Panc1 (cell line): ENCODE measurements at regions of chr10 and their contacts with region 1.

Region 1: GRCh38 chr10:63465293-63466143 is at the start of gene JMJD1C:
- DNase-seq: no peak
- ATAC-seq: peak; percentile 88
- H3K4me3 ChIP-seq: peak within 1 kb of the TSS; percentile 78 to 81
- H3K27ac ChIP-seq: peak within 1 kb of the TSS; percentile 98
- H3K4me1 ChIP-seq: peaks cover 33% of the 10 kb centered on the region
- H3K27me3 ChIP-seq: no peaks in the 10 kb centered on the region
- CTCF ChIP-seq: peak; percentile 29
- total RNA-seq, gene JMJD1C: 88.3 TPM

Region 2: GRCh38 chr10:62038609-62039190 is 1426.8 kb before region 1 on chr10:
- CTCF ChIA-PET with region 1: no interaction called
- POLR2A ChIA-PET with region 1: no interaction called
- in situ Hi-C with region 1: no loop called
- intact Hi-C with region 1: no loop called
- DNase-seq: peak; percentile 69
- ATAC-seq: peak; percentile 82
- H3K4me3 ChIP-seq: no peak overlapping the region
- H3K27ac ChIP-seq: peak overlapping the region; percentile 87
- H3K4me1 ChIP-seq: peaks cover 59% of the 10 kb centered on the region
- H3K27me3 ChIP-seq: no peaks in the 10 kb centered on the region
- CTCF ChIP-seq: peak; percentile 92

Region 3: DNA sequence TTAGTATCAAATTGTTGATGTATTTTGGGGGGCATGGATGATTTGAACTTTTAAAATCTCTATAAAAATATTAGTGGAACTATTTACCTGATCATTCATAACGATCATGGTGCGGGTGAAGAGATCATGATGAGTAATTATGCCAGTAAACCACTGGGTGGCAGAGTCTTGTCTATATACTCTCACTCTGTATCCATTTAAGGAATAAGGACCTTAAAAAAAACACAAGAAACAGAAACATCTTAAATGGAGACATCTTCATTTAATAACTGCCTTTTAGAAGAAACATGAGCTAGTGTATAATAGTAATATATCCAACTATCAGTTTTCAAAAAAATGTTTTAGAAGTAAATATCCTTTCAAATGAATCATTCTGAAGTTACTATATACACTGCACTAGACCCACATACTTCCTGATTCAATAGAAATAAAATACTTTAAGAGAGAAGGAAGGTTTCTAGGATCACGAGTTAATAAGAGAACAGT is 248.4 kb before region 1 on chr10:
- CTCF ChIA-PET with region 1: no interaction called
- POLR2A ChIA-PET with region 1: no interaction called
- in situ Hi-C with region 1: no loop called
- intact Hi-C with region 1: loop called (anchors 5 kb)
- DNase-seq: peak; percentile 41
- ATAC-seq: peak; percentile 95
- H3K4me3 ChIP-seq: no peak overlapping the region
- H3K27ac ChIP-seq: peak overlapping the region; percentile 21; the same call in 1 of the 2 replicates
- H3K4me1 ChIP-seq: peaks cover 18% of the 10 kb centered on the region; the same call in 1 of the 2 replicates
- H3K27me3 ChIP-seq: no peaks in the 10 kb centered on the region
- CTCF ChIP-seq: peak; percentile 76; the same call in 1 of the 2 replicates

Region 4: DNA sequence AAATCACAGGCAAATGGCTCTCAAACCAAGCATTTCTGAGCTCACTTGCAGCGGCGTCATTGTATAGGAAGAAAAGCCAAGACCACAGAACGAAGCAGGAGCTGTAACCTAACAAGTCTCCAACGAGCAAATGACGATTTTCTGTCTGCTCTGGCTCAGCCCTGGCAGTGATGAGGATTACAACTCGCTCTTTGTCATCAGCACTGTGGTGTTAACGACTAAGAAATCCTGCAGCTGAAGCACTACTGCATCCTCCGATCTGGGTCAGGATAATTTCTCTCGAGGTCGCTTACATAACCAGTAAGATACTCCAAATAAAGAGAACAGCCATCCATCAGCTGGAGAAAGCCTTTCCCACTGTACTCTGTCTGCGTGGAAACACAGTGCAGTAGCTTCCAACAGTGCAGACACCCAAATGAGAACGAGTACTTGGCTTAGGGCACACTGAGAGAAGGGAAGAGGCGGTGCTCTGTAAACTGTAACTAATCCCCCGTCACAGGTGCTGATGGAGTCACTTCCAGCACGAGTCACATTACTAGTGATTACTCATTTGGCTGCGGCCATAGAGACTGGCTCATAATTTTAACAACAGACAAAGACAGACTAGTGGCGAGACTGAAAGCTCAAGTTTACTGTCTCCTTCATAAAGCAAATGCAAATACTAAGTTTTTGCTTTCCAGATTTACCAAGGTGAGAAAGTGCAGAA is 196.6 kb before region 1 on chr10:
- CTCF ChIA-PET with region 1: no interaction called
- POLR2A ChIA-PET with region 1: no interaction called
- in situ Hi-C with region 1: no loop called
- intact Hi-C with region 1: loop called (anchors 10 kb)
- DNase-seq: peak; percentile 98
- ATAC-seq: peak; percentile 96
- H3K4me3 ChIP-seq: peak overlapping the region; percentile 77 to 91
- H3K27ac ChIP-seq: peak overlapping the region; percentile 95
- H3K4me1 ChIP-seq: peaks cover 18% of the 10 kb centered on the region
- H3K27me3 ChIP-seq: no peaks in the 10 kb centered on the region
- CTCF ChIP-seq: no peak

Region 5: GRCh38 chr10:63491588-63492316 is 26.2 kb after region 1 on chr10:
- CTCF ChIA-PET with region 1: no interaction called
- POLR2A ChIA-PET with region 1: no interaction called
- in situ Hi-C with region 1: no loop called
- intact Hi-C with region 1: no loop called
- DNase-seq: no peak
- ATAC-seq: no peak
- H3K4me3 ChIP-seq: no peak overlapping the region
- H3K27ac ChIP-seq: no peak overlapping the region
- H3K4me1 ChIP-seq: peaks cover 8% of the 10 kb centered on the region
- H3K27me3 ChIP-seq: no peaks in the 10 kb centered on the region
- CTCF ChIP-seq: no peak

Region 6: DNA sequence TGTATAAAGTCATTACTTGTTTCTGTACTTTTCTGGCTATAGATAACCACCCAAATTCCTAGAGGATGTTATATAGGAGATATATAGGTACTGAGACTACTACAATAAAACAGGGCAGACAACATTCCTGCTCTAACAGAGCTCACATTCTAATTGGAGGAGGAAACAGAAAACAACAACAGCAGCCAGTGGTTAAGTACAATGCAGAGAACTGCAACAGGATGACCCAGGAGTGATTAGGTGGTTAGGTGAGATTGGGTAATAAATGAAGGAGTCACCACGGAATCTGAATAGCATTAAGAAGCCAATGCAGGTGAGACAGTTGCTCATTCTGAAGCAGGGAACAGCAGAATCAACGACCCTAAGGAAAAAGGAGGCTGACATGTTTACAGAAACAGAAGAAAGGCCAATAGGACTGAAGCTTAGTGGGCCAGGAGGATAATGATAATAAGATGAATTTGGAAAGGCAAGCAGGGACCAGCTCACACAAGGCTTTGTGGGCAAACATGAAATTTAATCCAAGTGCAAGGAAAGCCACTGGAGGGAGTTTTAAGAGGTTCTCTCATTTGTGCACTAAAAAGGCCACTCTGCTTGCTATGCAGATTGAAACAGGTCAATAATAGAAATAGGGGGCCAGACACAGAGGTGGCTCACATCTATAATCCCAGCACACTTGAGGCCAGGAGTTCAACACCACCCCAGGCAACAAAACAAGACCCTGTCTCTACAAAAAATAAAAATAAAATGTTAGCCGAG is 38.8 kb after region 1 on chr10:
- CTCF ChIA-PET with region 1: no interaction called
- POLR2A ChIA-PET with region 1: interaction called, 10 read pairs
- in situ Hi-C with region 1: no loop called
- intact Hi-C with region 1: no loop called
- DNase-seq: no peak
- ATAC-seq: peak; percentile 44
- H3K4me3 ChIP-seq: no peak overlapping the region
- H3K27ac ChIP-seq: peak overlapping the region; percentile 30; the same call in 1 of the 2 replicates
- H3K4me1 ChIP-seq: peaks cover 9% of the 10 kb centered on the region
- H3K27me3 ChIP-seq: no peaks in the 10 kb centered on the region
- CTCF ChIP-seq: no peak

Region 7: GRCh38 chr10:63521416-63522276 is 56.1 kb after region 1 on chr10:
- CTCF ChIA-PET with region 1: no interaction called
- POLR2A ChIA-PET with region 1: interaction called, 3 read pairs
- in situ Hi-C with region 1: no loop called
- intact Hi-C with region 1: loop called (anchors 5 kb)
- DNase-seq: no peak
- ATAC-seq: peak; percentile 86
- H3K4me3 ChIP-seq: peak overlapping the region; percentile 71 to 83
- H3K27ac ChIP-seq: peak overlapping the region; percentile 94
- H3K4me1 ChIP-seq: peaks cover 66% of the 10 kb centered on the region
- H3K27me3 ChIP-seq: no peaks in the 10 kb centered on the region
- CTCF ChIP-seq: no peak; the same call in 1 of the 2 replicates

Region 8: DNA sequence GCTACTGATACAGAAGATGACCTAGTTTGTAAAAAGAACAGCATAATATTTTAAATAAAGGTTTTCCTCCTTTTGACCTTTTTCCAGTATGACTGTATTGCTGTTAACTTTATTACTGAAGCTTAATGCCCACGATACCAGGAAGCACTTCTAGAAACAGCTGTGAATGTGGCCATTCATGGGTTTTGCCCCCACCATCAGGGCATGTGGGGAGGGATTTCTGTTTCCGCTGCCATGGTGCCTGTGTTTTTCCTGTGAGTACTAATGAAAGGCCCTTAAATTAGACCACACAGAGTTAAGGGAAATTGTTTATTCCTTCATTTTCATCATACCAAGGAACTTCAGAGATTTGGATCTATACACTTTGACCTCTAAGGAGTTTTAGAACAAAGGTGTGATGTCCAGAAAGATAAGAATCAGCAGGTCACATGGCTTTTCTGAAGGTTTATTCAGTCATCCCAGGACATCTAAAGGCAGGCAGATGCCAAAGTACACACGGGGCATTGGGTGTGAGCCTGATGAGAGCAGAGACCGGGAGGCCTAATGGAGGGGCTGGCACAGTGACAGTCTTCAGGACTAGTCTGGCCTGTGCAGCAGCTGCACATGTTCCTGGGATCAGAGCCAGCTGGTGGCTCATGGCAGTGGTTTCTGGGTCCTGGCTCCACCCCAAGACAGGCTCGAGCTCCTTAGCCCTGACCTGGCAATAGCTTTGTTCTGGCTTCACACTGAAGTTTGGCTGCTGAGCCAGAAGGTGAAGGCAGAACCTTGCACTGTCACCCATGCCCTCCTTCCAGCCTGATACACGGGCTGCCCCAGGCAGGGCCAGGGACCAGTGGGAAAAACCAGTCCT is 246.6 kb after region 1 on chr10:
- CTCF ChIA-PET with region 1: no interaction called
- POLR2A ChIA-PET with region 1: no interaction called
- in situ Hi-C with region 1: no loop called
- intact Hi-C with region 1: loop called (anchors 10 kb)
- DNase-seq: peak; percentile 90
- ATAC-seq: peak; percentile 91
- H3K4me3 ChIP-seq: no peak overlapping the region
- H3K27ac ChIP-seq: peak overlapping the region; percentile 82
- H3K4me1 ChIP-seq: peaks cover 64% of the 10 kb centered on the region
- H3K27me3 ChIP-seq: no peaks in the 10 kb centered on the region
- CTCF ChIP-seq: no peak